ENCODE measurements at regions of chr1 and their contacts with region 1.

Region 1: GRCh38 chr1:84620720-84621313 is 46.6 kb upstream of the CTBS start:
- DNase-seq: peak; percentile 80
- H3K4me3 ChIP-seq: peak overlapping the region; percentile 33 to 66 (median 38)
- H3K27ac ChIP-seq: peak overlapping the region; percentile 69
- H3K4me1 ChIP-seq: peaks cover 15% of the 10 kb centered on the region
- H3K27me3 ChIP-seq: no peaks in the 10 kb centered on the region
- CTCF ChIP-seq: peak; percentile 65 to 84
- POLR2A ChIP-seq: no peak

Region 2: GRCh38 chr1:84365225-84366221 is 255.3 kb before region 1 on chr1:
- CTCF ChIA-PET with region 1: no interaction called
- POLR2A ChIA-PET with region 1: no interaction called
- dilution Hi-C with region 1: no loop called
- intact Hi-C with region 1: loop called (anchors 1 kb)
- DNase-seq: peak; percentile 96
- H3K4me3 ChIP-seq: no peak overlapping the region
- H3K27ac ChIP-seq: peak overlapping the region; percentile 97
- H3K4me1 ChIP-seq: peaks cover 28% of the 10 kb centered on the region
- H3K27me3 ChIP-seq: no peaks in the 10 kb centered on the region
- CTCF ChIP-seq: no peak
- POLR2A ChIP-seq: peak; percentile 51

Region 3: GRCh38 chr1:84506002-84506728 is 114.7 kb before region 1 on chr1 and contains the starts of genes GNG5 and SPATA1:
- CTCF ChIA-PET with region 1: interaction called, 5 read pairs
- POLR2A ChIA-PET with region 1: no interaction called
- dilution Hi-C with region 1: no loop called
- intact Hi-C with region 1: loop called (anchors 1 kb)
- DNase-seq: peak; percentile 97
- H3K4me3 ChIP-seq: peak within 1 kb of the TSS; percentile 55 to 89 (median 73)
- H3K27ac ChIP-seq: peak within 1 kb of the TSS; percentile 91
- H3K4me1 ChIP-seq: peaks cover 25% of the 10 kb centered on the region
- H3K27me3 ChIP-seq: no peaks in the 10 kb centered on the region
- CTCF ChIP-seq: no peak
- POLR2A ChIP-seq: peak; percentile 81
- total RNA-seq, gene GNG5: 172 and 175 TPM in 2 replicates
- total RNA-seq, gene SPATA1: 1.7 and 2.6 TPM in 2 replicates

Region 4: DNA sequence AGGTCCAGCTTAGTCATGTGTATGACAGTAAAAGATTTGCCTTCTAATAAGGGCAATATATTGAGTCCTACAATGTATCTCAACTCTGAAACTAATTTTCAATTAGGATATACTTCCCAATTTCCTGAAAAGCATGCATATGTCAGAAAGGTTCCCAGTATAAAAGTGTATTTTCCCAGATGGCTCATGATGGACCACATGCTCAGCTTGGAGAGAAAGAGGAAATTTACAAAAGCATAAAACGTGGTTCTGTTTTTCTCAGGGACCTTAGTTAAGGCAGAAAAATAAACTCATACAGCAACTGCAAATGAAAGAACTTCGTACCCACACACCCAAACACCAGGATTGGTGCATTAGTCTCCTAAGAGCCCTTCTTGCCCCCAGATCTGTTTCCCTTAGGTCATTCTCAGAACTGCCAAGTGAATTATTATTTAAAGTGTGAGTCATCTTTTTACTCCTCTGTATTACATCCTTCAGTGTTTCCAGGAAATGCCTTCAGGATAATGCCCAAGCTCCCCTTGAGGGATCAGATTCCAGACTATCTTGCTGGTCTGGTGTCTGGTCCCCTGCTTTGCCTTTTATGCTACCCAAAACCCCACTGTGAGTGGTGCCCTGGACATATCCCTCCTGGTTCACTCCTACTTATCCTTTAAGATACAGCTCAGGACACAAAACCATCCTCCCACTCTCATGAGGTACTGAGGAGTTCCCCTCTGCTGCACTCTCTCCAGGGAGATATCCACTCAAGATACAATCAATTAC is 12.0 kb after region 1 on chr1:
- CTCF ChIA-PET with region 1: interaction called, 4 read pairs
- POLR2A ChIA-PET with region 1: no interaction called
- dilution Hi-C with region 1: no loop called
- intact Hi-C with region 1: loop called (anchors 1 kb)
- DNase-seq: peak; percentile 70
- H3K4me3 ChIP-seq: no peak overlapping the region
- H3K27ac ChIP-seq: no peak overlapping the region
- H3K4me1 ChIP-seq: peaks cover 12% of the 10 kb centered on the region
- H3K27me3 ChIP-seq: no peaks in the 10 kb centered on the region
- CTCF ChIP-seq: no peak
- POLR2A ChIP-seq: no peak

Region 5: DNA sequence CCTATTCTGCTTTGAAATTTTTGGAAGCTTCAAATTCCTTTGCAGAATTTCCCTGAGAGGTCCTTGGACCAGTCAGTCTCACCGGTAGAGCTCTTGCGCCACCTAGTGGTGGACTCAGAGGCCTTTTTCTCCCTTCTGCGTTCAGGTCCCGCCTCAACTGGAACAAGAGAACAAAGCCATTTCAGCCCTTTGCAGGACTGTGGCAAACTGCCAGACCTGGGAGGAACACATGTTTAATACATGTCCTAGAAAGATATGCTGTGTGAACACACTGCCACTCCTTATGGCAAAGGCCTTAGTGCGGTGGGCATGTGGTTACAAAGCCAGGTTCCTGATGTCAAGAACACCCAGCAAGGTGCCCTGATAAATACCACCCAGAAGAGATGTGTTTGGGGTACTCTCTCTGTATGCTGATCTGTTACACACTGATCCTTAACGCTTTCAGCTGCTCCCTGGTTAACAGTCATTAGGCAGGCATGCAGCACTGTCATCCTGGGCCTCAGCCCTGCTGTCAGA is 151.7 kb after region 1 on chr1:
- CTCF ChIA-PET with region 1: interaction called, 3 read pairs
- POLR2A ChIA-PET with region 1: no interaction called
- dilution Hi-C with region 1: no loop called
- intact Hi-C with region 1: loop called (anchors 2 kb)
- DNase-seq: peak; percentile 74
- H3K4me3 ChIP-seq: no peak overlapping the region
- H3K27ac ChIP-seq: no peak overlapping the region
- H3K4me1 ChIP-seq: no peaks in the 10 kb centered on the region
- H3K27me3 ChIP-seq: peaks cover 2 to 12% of the 10 kb centered on the region in 2 experiments
- CTCF ChIP-seq: peak; percentile 83 to 87
- POLR2A ChIP-seq: no peak

Measured in endothelial cell of umbilical vein (primary cell).